ENCODE measurements at regions of chr5 and their contacts with region 1.

Region 1: GRCh38 chr5:87069974-87070624 is 197.6 kb upstream of the RASA1 start:
- DNase-seq: peak; percentile 80
- H3K4me3 ChIP-seq: peak overlapping the region in 1 of 3 experiments; percentile 19
- H3K27ac ChIP-seq: peak overlapping the region; percentile 74
- H3K4me1 ChIP-seq: peaks cover 18% of the 10 kb centered on the region
- H3K27me3 ChIP-seq: no peaks in the 10 kb centered on the region
- CTCF ChIP-seq: peak; percentile 66 to 69

Region 2: DNA sequence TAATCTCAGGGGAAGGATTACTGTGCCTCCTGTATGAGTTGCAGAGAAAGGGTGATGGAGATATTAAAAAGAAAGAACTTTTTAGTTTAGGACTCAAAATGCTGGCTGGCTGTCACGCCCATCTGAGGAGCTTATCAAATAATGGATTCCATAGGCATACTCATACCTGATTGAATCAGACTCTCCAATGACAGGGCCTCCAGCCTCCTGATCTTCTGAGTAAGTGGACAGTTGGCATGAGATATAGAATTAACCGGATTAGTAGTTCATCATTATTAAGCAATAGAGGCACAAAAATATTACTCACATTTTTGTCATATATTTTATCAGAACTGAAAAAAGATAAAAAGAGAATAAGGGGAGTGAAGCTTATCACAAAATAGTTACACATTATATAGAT is 40.6 kb after region 1 on chr5:
- CTCF ChIA-PET with region 1: no interaction called
- dilution Hi-C with region 1: no loop called
- in situ Hi-C with region 1: no loop called
- intact Hi-C with region 1: no loop called
- DNase-seq: no peak
- H3K4me3 ChIP-seq: no peak overlapping the region
- H3K27ac ChIP-seq: no peak overlapping the region
- H3K4me1 ChIP-seq: peaks cover 34% of the 10 kb centered on the region
- H3K27me3 ChIP-seq: no peaks in the 10 kb centered on the region
- CTCF ChIP-seq: no peak

Region 3: GRCh38 chr5:87121304-87122150 is 51.4 kb after region 1 on chr5:
- CTCF ChIA-PET with region 1: interaction called, 5 read pairs
- dilution Hi-C with region 1: no loop called
- in situ Hi-C with region 1: no loop called
- intact Hi-C with region 1: loop called (anchors 1 kb)
- DNase-seq: peak; percentile 88
- H3K4me3 ChIP-seq: peak overlapping the region in 2 of 3 experiments; percentile 19 to 24
- H3K27ac ChIP-seq: peak overlapping the region; percentile 96
- H3K4me1 ChIP-seq: peaks cover 63% of the 10 kb centered on the region
- H3K27me3 ChIP-seq: no peaks in the 10 kb centered on the region
- CTCF ChIP-seq: no peak

Region 4: GRCh38 chr5:87267574-87268125 is 197.6 kb after region 1 on chr5 and contains the start of gene RASA1:
- CTCF ChIA-PET with region 1: no interaction called
- dilution Hi-C with region 1: no loop called
- in situ Hi-C with region 1: loop called in 1 of 2 experiments (anchors 10 kb)
- intact Hi-C with region 1: loop called (anchors 1 kb)
- DNase-seq: peak; percentile 94
- H3K4me3 ChIP-seq: peak within 1 kb of the TSS; percentile 68 to 92 (median 86)
- H3K27ac ChIP-seq: peak within 1 kb of the TSS; percentile 77
- H3K4me1 ChIP-seq: peaks cover 10% of the 10 kb centered on the region
- H3K27me3 ChIP-seq: no peaks in the 10 kb centered on the region
- CTCF ChIP-seq: no peak
- total RNA-seq, gene RASA1: 45.2 to 57.9 TPM

Region 5: GRCh38 chr5:87277279-87277835 is 207.3 kb after region 1 on chr5:
- CTCF ChIA-PET with region 1: no interaction called
- dilution Hi-C with region 1: no loop called
- in situ Hi-C with region 1: loop called in 1 of 2 experiments (anchors 10 kb)
- intact Hi-C with region 1: no loop called
- DNase-seq: no peak
- H3K4me3 ChIP-seq: no peak overlapping the region
- H3K27ac ChIP-seq: no peak overlapping the region
- H3K4me1 ChIP-seq: peaks cover 10% of the 10 kb centered on the region
- H3K27me3 ChIP-seq: no peaks in the 10 kb centered on the region
- CTCF ChIP-seq: no peak

Region 6: GRCh38 chr5:87354496-87354895 is 284.4 kb after region 1 on chr5:
- CTCF ChIA-PET with region 1: no interaction called
- dilution Hi-C with region 1: no loop called
- in situ Hi-C with region 1: loop called in 1 of 2 experiments (anchors 25 kb)
- intact Hi-C with region 1: loop called (anchors 10 kb)
- DNase-seq: no peak
- H3K4me3 ChIP-seq: no peak overlapping the region
- H3K27ac ChIP-seq: no peak overlapping the region
- H3K4me1 ChIP-seq: no peaks in the 10 kb centered on the region
- H3K27me3 ChIP-seq: no peaks in the 10 kb centered on the region
- CTCF ChIP-seq: no peak

Region 7: GRCh38 chr5:87400305-87400899 is 330.3 kb after region 1 on chr5:
- CTCF ChIA-PET with region 1: interaction called, 11 read pairs
- dilution Hi-C with region 1: no loop called
- in situ Hi-C with region 1: no loop called
- intact Hi-C with region 1: loop called (anchors 1 kb)
- DNase-seq: peak; percentile 27
- H3K4me3 ChIP-seq: no peak overlapping the region
- H3K27ac ChIP-seq: no peak overlapping the region
- H3K4me1 ChIP-seq: peaks cover 7% of the 10 kb centered on the region
- H3K27me3 ChIP-seq: no peaks in the 10 kb centered on the region
- CTCF ChIP-seq: peak; percentile 59 to 66